Caco-2 (cell line): ENCODE measurements at regions of chr16 and their contacts with region 1.

Region 1: DNA sequence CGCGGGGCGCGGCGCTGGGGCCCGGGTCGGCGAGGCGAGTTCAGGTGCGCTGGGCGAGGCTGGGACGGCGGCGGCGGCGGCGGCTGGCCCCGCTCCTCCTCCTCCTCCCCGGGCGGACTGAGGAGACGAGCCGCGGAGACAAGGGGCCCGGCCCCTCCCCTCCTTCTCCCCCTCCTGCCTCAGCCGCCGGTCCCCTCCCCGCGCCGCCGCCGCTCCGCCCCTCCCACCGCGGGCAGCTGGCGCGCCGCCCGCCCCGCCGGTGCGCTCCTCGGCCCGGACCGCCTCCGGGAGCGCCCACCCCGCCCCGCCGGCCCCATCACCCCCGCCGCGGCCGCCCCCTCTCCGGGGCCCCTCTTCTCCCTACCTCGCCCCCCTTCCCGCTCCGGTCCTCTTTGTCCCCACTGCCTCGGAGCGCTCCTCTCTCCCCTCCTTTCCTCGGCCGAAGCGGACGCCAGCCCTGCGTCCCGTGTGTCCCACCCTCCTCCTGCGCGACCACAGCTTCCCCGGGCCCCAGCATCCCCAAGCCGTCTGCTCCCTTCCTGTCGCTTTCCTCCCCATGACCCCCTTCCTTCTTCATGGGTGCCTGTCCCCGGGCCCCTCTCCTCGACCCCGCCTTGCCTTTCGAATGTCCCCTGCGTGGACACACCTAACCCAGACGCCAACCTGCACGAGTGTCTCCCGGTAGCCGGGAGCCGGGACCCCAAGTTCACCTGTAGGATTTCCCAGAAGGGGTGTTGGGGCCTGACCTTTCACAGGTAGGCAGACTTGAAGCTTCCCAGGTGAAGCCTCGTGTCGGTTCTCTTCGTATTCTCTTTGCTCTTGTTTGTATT is at the start of gene TOX3:
- DNase-seq: peak; percentile 63
- H3K4me3 ChIP-seq: peak within 1 kb of the TSS; percentile 80
- H3K4me3 Mint-ChIP-seq: peak within 1 kb of the TSS; percentile 80
- H3K27ac Mint-ChIP-seq: no peak within 1 kb of the TSS
- H3K4me1 ChIP-seq: 0 out of 2 replicates have a peak, but pooled peaks cover 3% of the 10 kb centered on the region
- H3K4me1 Mint-ChIP-seq: peaks cover 6% of the 10 kb centered on the region
- H3K27me3 ChIP-seq: no peaks in the 10 kb centered on the region
- H3K27me3 Mint-ChIP-seq: peaks cover 3% of the 10 kb centered on the region
- CTCF ChIP-seq: no peak
- total RNA-seq, gene TOX3: 3.6 and 6.0 TPM in 2 replicates

Region 2: GRCh38 chr16:52440248-52440647 is 107.0 kb before region 1 on chr16:
- CTCF ChIA-PET with region 1: no interaction called
- POLR2A ChIA-PET with region 1: no interaction called
- intact Hi-C with region 1: loop called (anchors 5 kb)
- DNase-seq: no peak
- H3K4me3 ChIP-seq: no peak overlapping the region
- H3K4me3 Mint-ChIP-seq: no peak overlapping the region
- H3K27ac Mint-ChIP-seq: no peak overlapping the region
- H3K4me1 ChIP-seq: no peaks in the 10 kb centered on the region
- H3K4me1 Mint-ChIP-seq: no peaks in the 10 kb centered on the region
- H3K27me3 ChIP-seq: no peaks in the 10 kb centered on the region
- H3K27me3 Mint-ChIP-seq: no peaks in the 10 kb centered on the region
- CTCF ChIP-seq: no peak

Region 3: GRCh38 chr16:52469775-52470174 is 77.4 kb before region 1 on chr16:
- CTCF ChIA-PET with region 1: no interaction called
- POLR2A ChIA-PET with region 1: no interaction called
- intact Hi-C with region 1: no loop called
- DNase-seq: no peak
- H3K4me3 ChIP-seq: no peak overlapping the region
- H3K4me3 Mint-ChIP-seq: no peak overlapping the region
- H3K27ac Mint-ChIP-seq: no peak overlapping the region
- H3K4me1 ChIP-seq: no peaks in the 10 kb centered on the region
- H3K4me1 Mint-ChIP-seq: peaks cover 4% of the 10 kb centered on the region
- H3K27me3 ChIP-seq: no peaks in the 10 kb centered on the region
- H3K27me3 Mint-ChIP-seq: no peaks in the 10 kb centered on the region
- CTCF ChIP-seq: no peak

Region 4: DNA sequence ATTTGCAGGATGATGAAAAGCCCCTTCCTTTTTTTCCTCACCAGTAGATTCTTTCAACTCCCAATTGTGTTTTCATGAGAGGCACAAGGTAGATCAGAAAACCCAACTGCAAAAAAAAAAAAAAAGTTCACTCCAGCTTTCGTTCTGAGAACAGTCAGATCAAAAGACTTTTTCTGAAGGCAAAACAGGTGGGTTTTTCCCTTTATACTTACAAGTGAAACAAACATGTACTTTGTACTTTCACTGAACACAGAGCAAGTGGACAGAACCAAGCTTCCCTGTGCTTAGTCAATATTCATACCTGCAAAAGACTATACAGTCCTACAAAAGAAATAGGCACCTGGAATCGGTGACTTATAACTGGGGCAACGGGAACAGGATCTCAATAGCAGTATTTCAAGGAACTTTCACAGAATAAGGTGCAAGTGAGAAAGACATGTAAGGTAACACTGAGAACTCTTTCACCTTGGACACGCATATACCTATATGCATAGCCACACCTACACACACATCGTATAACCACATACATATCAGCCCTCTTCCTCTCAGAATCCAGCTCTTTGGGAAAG is 54.3 kb before region 1 on chr16:
- CTCF ChIA-PET with region 1: no interaction called
- POLR2A ChIA-PET with region 1: no interaction called
- intact Hi-C with region 1: loop called (anchors 5 kb)
- DNase-seq: peak in 1 of 2 experiments; percentile 54
- H3K4me3 ChIP-seq: no peak overlapping the region
- H3K4me3 Mint-ChIP-seq: peak overlapping the region; percentile 57
- H3K27ac Mint-ChIP-seq: peak overlapping the region; percentile 91
- H3K4me1 ChIP-seq: peaks cover 39% of the 10 kb centered on the region
- H3K4me1 Mint-ChIP-seq: peaks cover 38% of the 10 kb centered on the region
- H3K27me3 ChIP-seq: no peaks in the 10 kb centered on the region
- H3K27me3 Mint-ChIP-seq: no peaks in the 10 kb centered on the region
- CTCF ChIP-seq: no peak